ENCODE measurements at regions of chr6 and their contacts with region 1.

Region 1: GRCh38 chr6:165573671-165574070 is 89.4 kb downstream of the PDE10A start:
- DNase-seq: peak; percentile 97
- H3K4me3 ChIP-seq: no peak overlapping the region
- H3K27ac ChIP-seq: peak overlapping the region; percentile 69
- H3K4me1 ChIP-seq: peaks cover 19% of the 10 kb centered on the region
- H3K27me3 ChIP-seq: no peaks in the 10 kb centered on the region
- CTCF ChIP-seq: no peak
- POLR2A ChIP-seq: peak; percentile 26

Region 2: GRCh38 chr6:165025040-165025439 is 548.6 kb before region 1 on chr6:
- CTCF ChIA-PET with region 1: no interaction called
- POLR2A ChIA-PET with region 1: no interaction called
- dilution Hi-C with region 1: no loop called
- intact Hi-C with region 1: no loop called
- DNase-seq: no peak
- H3K4me3 ChIP-seq: no peak overlapping the region
- H3K27ac ChIP-seq: no peak overlapping the region
- H3K4me1 ChIP-seq: no peaks in the 10 kb centered on the region
- H3K27me3 ChIP-seq: no peaks in the 10 kb centered on the region
- CTCF ChIP-seq: no peak
- POLR2A ChIP-seq: no peak

Region 3: DNA sequence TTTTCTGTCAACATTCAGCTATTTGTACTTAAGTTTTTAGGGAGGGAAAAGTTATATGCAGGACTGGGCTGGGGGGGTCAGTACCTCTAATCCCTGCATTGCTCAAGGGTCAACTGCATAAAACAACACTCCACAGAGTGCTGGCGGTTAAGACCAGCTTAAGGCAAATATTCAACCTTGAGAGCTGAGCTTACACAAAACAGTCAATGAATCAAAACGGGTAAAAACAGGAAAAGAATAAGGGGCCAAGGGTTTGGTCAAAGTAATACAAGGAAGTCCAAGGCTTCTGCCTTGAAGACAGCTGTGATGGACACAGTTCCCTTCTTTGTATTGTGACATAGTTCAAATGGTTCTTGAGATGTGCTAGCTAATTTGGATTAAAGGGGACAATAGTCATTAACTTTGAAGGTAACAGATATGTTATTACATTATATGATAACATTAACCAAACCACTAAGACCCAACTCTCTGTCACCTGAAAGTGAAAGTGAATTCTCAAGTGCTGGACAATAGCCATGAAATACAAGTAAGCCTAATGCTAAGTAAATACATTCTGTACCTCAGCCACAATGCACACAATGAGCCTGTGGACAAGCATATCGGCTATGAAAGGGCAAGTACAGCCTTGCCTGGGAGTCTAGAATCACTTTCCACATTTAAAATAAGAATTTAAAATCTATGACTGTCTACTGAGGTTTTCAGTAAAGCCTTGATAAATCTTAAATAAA is 17.4 kb before region 1 on chr6:
- CTCF ChIA-PET with region 1: interaction called, 3 read pairs
- POLR2A ChIA-PET with region 1: no interaction called
- dilution Hi-C with region 1: no loop called
- intact Hi-C with region 1: loop called (anchors 1 kb)
- DNase-seq: peak; percentile 85
- H3K4me3 ChIP-seq: no peak overlapping the region
- H3K27ac ChIP-seq: no peak overlapping the region
- H3K4me1 ChIP-seq: peaks cover 7% of the 10 kb centered on the region
- H3K27me3 ChIP-seq: peaks cover 0 to 4% of the 10 kb centered on the region in 2 experiments
- CTCF ChIP-seq: no peak
- POLR2A ChIP-seq: no peak

Region 4: DNA sequence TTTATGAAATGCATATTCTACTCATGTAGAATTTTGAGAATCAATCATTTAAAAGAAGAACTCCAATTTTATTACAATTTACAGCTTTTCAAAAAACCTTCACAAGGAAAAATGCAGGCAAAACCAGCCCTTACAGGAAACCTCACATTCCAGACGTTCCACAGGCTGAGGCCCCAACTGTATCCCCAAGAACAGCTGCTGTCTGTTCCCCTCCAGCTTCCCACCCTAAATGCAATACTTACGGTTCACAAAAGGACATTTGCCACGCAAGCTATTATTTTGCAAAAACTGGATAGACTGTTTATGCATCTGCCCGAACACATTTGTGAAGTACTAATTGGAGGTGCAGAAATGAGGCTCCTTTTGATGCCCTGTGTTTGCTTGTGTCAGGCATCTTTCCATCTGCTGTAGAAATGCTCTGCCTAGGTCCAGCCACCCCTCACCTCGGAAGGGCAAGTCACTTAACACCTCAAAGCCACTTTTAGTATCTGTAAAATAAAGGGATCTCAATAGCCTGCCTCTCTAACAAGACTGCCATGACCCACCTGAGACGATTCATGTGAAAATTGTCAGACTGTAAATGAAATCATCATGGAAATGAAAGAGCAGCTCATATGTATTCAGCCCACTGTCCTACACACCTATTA is 62.9 kb after region 1 on chr6:
- CTCF ChIA-PET with region 1: interaction called, 8 read pairs
- POLR2A ChIA-PET with region 1: no interaction called
- dilution Hi-C with region 1: no loop called
- intact Hi-C with region 1: loop called (anchors 2 kb)
- DNase-seq: peak; percentile 64
- H3K4me3 ChIP-seq: no peak overlapping the region
- H3K27ac ChIP-seq: no peak overlapping the region
- H3K4me1 ChIP-seq: no peaks in the 10 kb centered on the region
- H3K27me3 ChIP-seq: peaks cover 0 to 2% of the 10 kb centered on the region in 2 experiments
- CTCF ChIP-seq: no peak
- POLR2A ChIP-seq: no peak

Region 5: DNA sequence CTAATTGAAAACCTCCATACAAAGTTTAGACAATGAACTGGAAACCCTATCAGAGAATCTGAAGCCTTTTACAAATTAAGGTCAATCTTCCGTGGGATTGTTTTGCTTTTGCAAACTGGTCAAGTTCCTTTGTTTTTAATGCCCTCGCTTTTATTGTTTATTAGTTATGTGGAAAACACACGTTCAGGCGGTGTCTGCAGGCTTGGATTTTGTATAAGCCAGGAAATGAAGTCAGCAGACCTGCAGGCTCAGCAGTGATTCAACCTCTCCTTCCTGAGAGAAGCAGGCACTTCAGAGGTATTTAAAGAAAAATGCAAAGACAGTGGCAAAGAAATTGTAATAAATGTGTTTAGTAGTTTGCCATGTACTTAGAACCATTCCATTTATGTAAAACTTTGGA is 192.8 kb after region 1 on chr6:
- CTCF ChIA-PET with region 1: no interaction called
- POLR2A ChIA-PET with region 1: no interaction called
- dilution Hi-C with region 1: no loop called
- intact Hi-C with region 1: loop called (anchors 1 kb)
- DNase-seq: peak; percentile 97
- H3K4me3 ChIP-seq: peak overlapping the region in 1 of 3 experiments; percentile 11
- H3K27ac ChIP-seq: peak overlapping the region; percentile 98
- H3K4me1 ChIP-seq: peaks cover 44% of the 10 kb centered on the region
- H3K27me3 ChIP-seq: no peaks in the 10 kb centered on the region
- CTCF ChIP-seq: no peak
- POLR2A ChIP-seq: no peak